ENCODE measurements at regions of chr9 and their contacts with region 1.

Region 1: GRCh38 chr9:130940693-130941576 is 1.9 kb upstream of the FIBCD1 start:
- DNase-seq: peak; percentile 15
- ATAC-seq: no peak
- H3K4me3 ChIP-seq: no peak overlapping the region
- H3K27ac ChIP-seq: no peak overlapping the region
- H3K4me1 ChIP-seq: peaks cover 15% of the 10 kb centered on the region
- H3K27me3 ChIP-seq: peaks cover 45% of the 10 kb centered on the region
- CTCF ChIP-seq: peak; percentile 72
- POLR2A ChIP-seq: no peak
- RAD21 ChIP-seq: peak; percentile 74

Region 2: DNA sequence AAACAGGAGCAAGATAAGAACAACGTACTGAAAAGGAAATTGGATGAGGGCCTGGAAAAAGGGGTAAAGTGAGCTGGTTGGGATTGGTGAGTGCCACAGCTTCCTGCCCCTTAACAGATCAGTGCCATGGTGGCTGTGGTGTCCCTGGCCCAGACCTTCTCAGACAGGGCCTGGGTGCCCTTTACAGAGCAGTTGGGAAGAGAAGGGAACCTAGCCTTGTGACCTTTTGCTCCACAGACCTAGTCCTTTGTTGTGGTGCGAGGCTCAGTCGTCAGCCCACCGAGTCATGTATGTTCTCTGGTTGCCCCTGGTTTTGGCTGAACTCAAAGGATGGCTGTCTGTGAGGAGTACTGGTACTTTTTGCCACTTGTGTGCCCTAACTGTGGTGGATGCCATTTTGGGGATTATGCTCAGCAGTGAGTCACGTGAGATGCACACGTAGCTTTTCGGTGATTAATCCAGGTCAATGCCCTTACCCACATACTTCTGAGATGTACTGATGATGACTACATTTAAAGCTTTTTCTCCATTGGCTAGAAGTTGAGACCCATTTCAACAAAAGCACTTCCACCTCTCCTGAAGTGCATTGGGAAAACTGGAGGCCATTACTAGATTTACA is 199.0 kb before region 1 on chr9:
- CTCF ChIA-PET with region 1: no interaction called
- POLR2A ChIA-PET with region 1: no interaction called
- dilution Hi-C with region 1: no loop called
- in situ Hi-C with region 1: no loop called
- intact Hi-C with region 1: no loop called
- DNase-seq: peak; percentile 88
- ATAC-seq: peak; percentile 77
- H3K4me3 ChIP-seq: no peak overlapping the region
- H3K27ac ChIP-seq: no peak overlapping the region; the same call in 1 of the 2 replicates
- H3K4me1 ChIP-seq: peaks cover 7% of the 10 kb centered on the region
- H3K27me3 ChIP-seq: no peaks in the 10 kb centered on the region
- CTCF ChIP-seq: no peak
- POLR2A ChIP-seq: no peak
- RAD21 ChIP-seq: no peak

Region 3: DNA sequence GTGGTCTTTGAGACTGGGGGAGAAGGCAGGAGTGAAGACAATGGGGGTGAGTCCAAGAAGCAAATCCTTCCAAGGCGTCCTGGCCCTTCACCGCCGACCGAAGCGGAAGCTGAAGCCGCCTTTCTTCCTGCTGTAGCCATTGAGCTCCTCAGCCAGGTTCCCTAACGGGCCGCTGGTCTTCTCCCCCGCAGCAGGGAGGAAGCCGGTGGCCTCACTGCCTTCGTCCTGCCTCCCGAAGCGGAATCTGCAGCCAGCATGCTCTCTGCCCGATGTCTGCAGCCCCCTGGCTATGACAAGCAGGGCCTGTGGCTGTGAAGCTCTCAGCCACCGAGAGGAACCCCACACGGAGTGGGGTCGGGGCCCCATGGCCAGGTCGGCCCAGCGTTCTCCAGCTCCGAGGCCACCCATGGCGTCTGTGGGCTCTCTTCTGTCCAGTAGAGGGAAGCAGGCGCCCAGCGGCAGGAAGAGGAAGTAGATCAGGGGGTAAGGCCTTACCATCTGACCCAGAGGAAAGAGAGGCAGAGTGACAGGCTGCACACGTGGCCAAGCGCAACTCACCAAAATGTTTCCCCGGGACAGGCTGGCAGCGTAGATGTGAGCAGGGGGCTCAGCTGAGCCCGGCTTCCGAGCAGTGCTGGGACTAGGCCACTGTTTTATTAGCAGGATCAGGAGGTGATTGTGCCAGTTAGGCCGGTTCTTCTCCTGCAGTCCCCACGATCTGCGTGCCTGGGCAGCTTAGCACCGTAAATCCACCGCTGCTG is 47.4 kb before region 1 on chr9:
- CTCF ChIA-PET with region 1: no interaction called
- POLR2A ChIA-PET with region 1: no interaction called
- dilution Hi-C with region 1: no loop called
- in situ Hi-C with region 1: no loop called
- intact Hi-C with region 1: loop called (anchors 5 kb)
- DNase-seq: no peak
- ATAC-seq: peak; percentile 22; the same call in 1 of the 2 replicates
- H3K4me3 ChIP-seq: no peak overlapping the region
- H3K27ac ChIP-seq: no peak overlapping the region
- H3K4me1 ChIP-seq: no peaks in the 10 kb centered on the region
- H3K27me3 ChIP-seq: no peaks in the 10 kb centered on the region
- CTCF ChIP-seq: 0 out of 2 replicates have a peak, but pooled peaks have one; percentile 16
- POLR2A ChIP-seq: no peak
- RAD21 ChIP-seq: peak; percentile 30; the same call in 1 of the 2 replicates